ENCODE measurements at regions of chr5 and their contacts with region 1.

Region 1: GRCh38 chr5:111550279-111551020 is 38.1 kb upstream of the STARD4 start:
- DNase-seq: peak; percentile 66 to 92
- H3K4me3 ChIP-seq: no peak overlapping the region
- H3K27ac ChIP-seq: peak overlapping the region in 3 of 5 donors; percentile 24 to 39 (median 32)
- H3K4me1 ChIP-seq: peaks cover 0 to 27% (median 17%) of the 10 kb centered on the region in 4 donors
- H3K27me3 ChIP-seq: no peaks in the 10 kb centered on the region
- CTCF ChIP-seq: peak in 5 of 7 experiments; percentile 40 to 71 (median 63)
- EP300 ChIP-seq: no peak
- POLR2A ChIP-seq: no peak

Region 2: GRCh38 chr5:111163000-111163399 is 387.4 kb before region 1 on chr5:
- intact Hi-C with region 1: no loop called
- DNase-seq: no peak
- H3K4me3 ChIP-seq: no peak overlapping the region
- H3K27ac ChIP-seq: no peak overlapping the region
- H3K4me1 ChIP-seq: peaks cover 0 to 3% (median 0%) of the 10 kb centered on the region in 4 donors
- H3K27me3 ChIP-seq: no peaks in the 10 kb centered on the region
- CTCF ChIP-seq: no peak
- EP300 ChIP-seq: no peak
- POLR2A ChIP-seq: no peak

Region 3: DNA sequence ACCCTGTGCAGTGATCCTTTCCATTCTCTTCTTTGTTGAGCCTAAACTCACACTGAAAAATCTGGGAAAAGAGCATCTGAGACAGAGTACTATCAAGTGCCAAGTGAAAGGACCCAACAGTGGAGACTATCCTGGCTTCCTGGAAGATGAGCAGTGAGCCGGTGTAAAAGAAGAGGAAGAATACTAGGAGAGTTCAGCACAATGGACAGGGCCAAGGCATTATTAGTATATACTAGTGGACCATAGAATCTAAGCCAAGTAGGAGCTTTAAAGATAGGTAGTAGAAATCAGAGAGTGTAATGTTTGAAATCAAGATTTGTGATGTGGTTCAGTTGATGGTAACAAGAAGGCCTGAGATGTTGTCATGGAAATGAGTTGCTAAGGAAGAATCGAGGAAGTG is 185.5 kb before region 1 on chr5:
- intact Hi-C with region 1: no loop called
- DNase-seq: peak in 1 of 2 donors; percentile 17
- H3K4me3 ChIP-seq: no peak overlapping the region
- H3K27ac ChIP-seq: no peak overlapping the region
- H3K4me1 ChIP-seq: no peaks in the 10 kb centered on the region
- H3K27me3 ChIP-seq: no peaks in the 10 kb centered on the region
- CTCF ChIP-seq: no peak
- EP300 ChIP-seq: no peak
- POLR2A ChIP-seq: no peak

Region 4: GRCh38 chr5:111762895-111763294 is 212.4 kb after region 1 on chr5:
- intact Hi-C with region 1: loop called (anchors 10 kb)
- DNase-seq: peak in 1 of 2 donors; percentile 67
- H3K4me3 ChIP-seq: no peak overlapping the region
- H3K27ac ChIP-seq: no peak overlapping the region
- H3K4me1 ChIP-seq: peaks cover 0 to 9% (median 5%) of the 10 kb centered on the region in 4 donors
- H3K27me3 ChIP-seq: no peaks in the 10 kb centered on the region
- CTCF ChIP-seq: no peak
- EP300 ChIP-seq: no peak
- POLR2A ChIP-seq: no peak

Region 5: GRCh38 chr5:112146323-112147226 is 596.1 kb after region 1 on chr5:
- intact Hi-C with region 1: loop called (anchors 5 kb)
- DNase-seq: peak; percentile 53 to 91
- H3K4me3 ChIP-seq: no peak overlapping the region
- H3K27ac ChIP-seq: peak overlapping the region in 1 of 5 donors; percentile 22
- H3K4me1 ChIP-seq: peaks cover 0 to 6% (median 3%) of the 10 kb centered on the region in 4 donors
- H3K27me3 ChIP-seq: no peaks in the 10 kb centered on the region
- CTCF ChIP-seq: peak in 5 of 7 experiments; percentile 73 to 92 (median 81)
- EP300 ChIP-seq: no peak
- POLR2A ChIP-seq: no peak